ENCODE measurements at regions of chr19 and their contacts with region 1.

Region 1: GRCh38 chr19:49555600-49556411 is 24.6 kb downstream of the NOSIP start:
- DNase-seq: peak; percentile 87
- H3K4me3 Mint-ChIP-seq: peak overlapping the region; percentile 47
- H3K27ac Mint-ChIP-seq: peak overlapping the region; percentile 91
- H3K4me1 Mint-ChIP-seq: peaks cover 81% of the 10 kb centered on the region
- H3K27me3 Mint-ChIP-seq: no peaks in the 10 kb centered on the region

Region 2: GRCh38 chr19:49430678-49431329 is 125.0 kb before region 1 on chr19:
- CTCF ChIA-PET with region 1: no interaction called
- POLR2A ChIA-PET with region 1: no interaction called
- DNase-seq: peak; percentile 36
- H3K4me3 Mint-ChIP-seq: no peak overlapping the region
- H3K27ac Mint-ChIP-seq: no peak overlapping the region
- H3K4me1 Mint-ChIP-seq: peaks cover 46% of the 10 kb centered on the region
- H3K27me3 Mint-ChIP-seq: peaks cover 83% of the 10 kb centered on the region

Region 3: GRCh38 chr19:49487277-49488045 is 68.3 kb before region 1 on chr19 and contains the start of gene RPL13A:
- CTCF ChIA-PET with region 1: interaction called, 3 read pairs
- POLR2A ChIA-PET with region 1: interaction called, 10 read pairs
- DNase-seq: peak; percentile 100
- H3K4me3 Mint-ChIP-seq: peak within 1 kb of the TSS; percentile 95
- H3K27ac Mint-ChIP-seq: peak within 1 kb of the TSS; percentile 87
- H3K4me1 Mint-ChIP-seq: peaks cover 50% of the 10 kb centered on the region
- H3K27me3 Mint-ChIP-seq: no peaks in the 10 kb centered on the region
- total RNA-seq, gene RPL13A: 2,417 to 2,463 TPM

Region 4: DNA sequence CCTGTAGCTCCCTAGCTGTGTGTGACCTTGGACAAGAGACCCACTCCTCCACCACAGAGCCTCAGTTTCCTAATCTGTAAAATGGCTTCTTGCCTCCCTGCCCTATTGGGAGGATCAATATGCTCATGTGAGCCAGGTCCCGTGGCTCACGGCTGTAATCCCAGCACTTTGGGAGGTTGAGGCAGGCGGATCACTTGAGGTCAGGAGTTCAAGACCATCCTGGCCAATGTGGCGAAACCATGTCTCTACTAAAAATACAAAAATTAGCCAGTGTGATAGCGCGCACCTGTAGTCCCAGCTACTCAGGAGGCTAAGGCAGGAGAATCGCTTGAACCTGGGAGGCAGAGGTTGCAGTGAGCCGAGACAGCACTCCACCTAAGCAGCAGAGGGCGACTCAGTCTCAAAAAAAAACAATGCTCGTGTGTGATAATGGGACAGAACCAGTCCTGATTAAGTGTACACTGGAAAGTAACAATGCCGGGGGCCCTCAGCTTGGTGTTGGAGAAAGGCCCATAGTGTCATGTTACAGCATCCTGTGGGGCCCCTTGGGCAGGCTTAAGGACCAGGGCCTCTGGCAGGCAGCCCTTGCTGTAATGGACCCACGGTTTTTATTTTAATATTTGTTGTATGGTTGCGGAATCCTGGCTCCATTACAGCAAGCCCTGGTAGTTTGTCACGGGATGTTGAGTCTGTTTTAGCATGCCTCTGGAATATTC is 52.8 kb before region 1 on chr19:
- CTCF ChIA-PET with region 1: interaction called, 17 read pairs
- POLR2A ChIA-PET with region 1: interaction called, 6 read pairs
- DNase-seq: peak; percentile 63
- H3K4me3 Mint-ChIP-seq: no peak overlapping the region
- H3K27ac Mint-ChIP-seq: peak overlapping the region; percentile 81
- H3K4me1 Mint-ChIP-seq: peaks cover 51% of the 10 kb centered on the region
- H3K27me3 Mint-ChIP-seq: no peaks in the 10 kb centered on the region

Region 5: GRCh38 chr19:49580264-49581006 is 24.6 kb after region 1 on chr19 and contains the start of gene NOSIP:
- CTCF ChIA-PET with region 1: interaction called, 3 read pairs
- POLR2A ChIA-PET with region 1: interaction called, 13 read pairs
- DNase-seq: peak; percentile 98
- H3K4me3 Mint-ChIP-seq: peak within 1 kb of the TSS; percentile 89
- H3K27ac Mint-ChIP-seq: peak within 1 kb of the TSS; percentile 82
- H3K4me1 Mint-ChIP-seq: peaks cover 33% of the 10 kb centered on the region
- H3K27me3 Mint-ChIP-seq: no peaks in the 10 kb centered on the region
- total RNA-seq, gene NOSIP: 162 to 163 TPM

Measured in activated CD4-positive, alpha-beta memory T cell treated with anti-CD3 and anti-CD28 coated beads, Interleukin-2, amount 10 ng/mL, durations not matched to agents 7 days and 5 days (primary cell).